Aorta (tissue), 5 donors: ENCODE measurements at regions of chr10 and their contacts with region 1.

Region 1: GRCh38 chr10:44864637-44865288 is 46.4 kb upstream of the TMEM72 start:
- DNase-seq: peak; percentile 94 to 99
- ATAC-seq: peak; percentile 96
- H3K4me3 ChIP-seq: peak overlapping the region in 1 of 2 donors; percentile 47
- H3K27ac ChIP-seq: no peak overlapping the region
- H3K4me1 ChIP-seq: no peaks in the 10 kb centered on the region
- H3K27me3 ChIP-seq: no peaks in the 10 kb centered on the region

Region 2: GRCh38 chr10:43671656-43672531 is 1192.9 kb before region 1 on chr10:
- intact Hi-C with region 1: loop called (anchors 2 to 5 kb)
- DNase-seq: no peak
- ATAC-seq: peak; percentile 69
- H3K4me3 ChIP-seq: no peak overlapping the region
- H3K27ac ChIP-seq: no peak overlapping the region
- H3K4me1 ChIP-seq: no peaks in the 10 kb centered on the region
- H3K27me3 ChIP-seq: peaks cover 0 to 2% of the 10 kb centered on the region in 2 donors